ENCODE measurements at regions of chr12 and their contacts with region 1.

Region 1: GRCh38 chr12:81644503-81644902 is 114.6 kb downstream of the PPFIA2 start:
- DNase-seq: peak; percentile 41
- H3K4me3 ChIP-seq: no peak overlapping the region
- H3K27ac ChIP-seq: no peak overlapping the region
- H3K4me1 ChIP-seq: no peaks in the 10 kb centered on the region
- H3K27me3 ChIP-seq: peaks cover 0 to 1% of the 10 kb centered on the region in 2 experiments
- CTCF ChIP-seq: peak in 1 of 2 donors; percentile 9
- POLR2A ChIP-seq: no peak

Region 2: GRCh38 chr12:81797100-81797499 is 152.6 kb after region 1 on chr12:
- CTCF ChIA-PET with region 1: interaction called, 6 read pairs
- POLR2A ChIA-PET with region 1: no interaction called
- dilution Hi-C with region 1: no loop called
- intact Hi-C with region 1: loop called (anchors 5 kb)
- DNase-seq: peak; percentile 8
- H3K4me3 ChIP-seq: no peak overlapping the region
- H3K27ac ChIP-seq: no peak overlapping the region
- H3K4me1 ChIP-seq: no peaks in the 10 kb centered on the region
- H3K27me3 ChIP-seq: peaks cover 2 to 6% of the 10 kb centered on the region in 2 experiments
- CTCF ChIP-seq: peak; percentile 17 to 31
- POLR2A ChIP-seq: no peak

Region 3: GRCh38 chr12:81992461-81992860 is 348.0 kb after region 1 on chr12:
- CTCF ChIA-PET with region 1: interaction called, 3 read pairs
- POLR2A ChIA-PET with region 1: no interaction called
- dilution Hi-C with region 1: no loop called
- intact Hi-C with region 1: loop called (anchors 1 kb)
- DNase-seq: peak; percentile 1
- H3K4me3 ChIP-seq: no peak overlapping the region
- H3K27ac ChIP-seq: no peak overlapping the region
- H3K4me1 ChIP-seq: no peaks in the 10 kb centered on the region
- H3K27me3 ChIP-seq: no peaks in the 10 kb centered on the region
- CTCF ChIP-seq: no peak
- POLR2A ChIP-seq: no peak

Region 4: GRCh38 chr12:82019533-82019932 is 375.0 kb after region 1 on chr12:
- CTCF ChIA-PET with region 1: no interaction called
- POLR2A ChIA-PET with region 1: no interaction called
- dilution Hi-C with region 1: no loop called
- intact Hi-C with region 1: loop called (anchors 1 kb)
- DNase-seq: no peak
- H3K4me3 ChIP-seq: no peak overlapping the region
- H3K27ac ChIP-seq: no peak overlapping the region
- H3K4me1 ChIP-seq: no peaks in the 10 kb centered on the region
- H3K27me3 ChIP-seq: no peaks in the 10 kb centered on the region
- CTCF ChIP-seq: no peak
- POLR2A ChIP-seq: no peak

Region 5: GRCh38 chr12:82326905-82327503 is 682.5 kb after region 1 on chr12:
- CTCF ChIA-PET with region 1: interaction called, 23 read pairs
- POLR2A ChIA-PET with region 1: no interaction called
- dilution Hi-C with region 1: no loop called
- intact Hi-C with region 1: loop called (anchors 1 kb)
- DNase-seq: peak; percentile 28
- H3K4me3 ChIP-seq: no peak overlapping the region
- H3K27ac ChIP-seq: no peak overlapping the region
- H3K4me1 ChIP-seq: no peaks in the 10 kb centered on the region
- H3K27me3 ChIP-seq: no peaks in the 10 kb centered on the region
- CTCF ChIP-seq: peak; percentile 14 to 24
- POLR2A ChIP-seq: no peak

Region 6: GRCh38 chr12:82358200-82359114 is 714.0 kb after region 1 on chr12 and contains the starts of genes CCDC59 and METTL25:
- CTCF ChIA-PET with region 1: interaction called, 10 read pairs
- POLR2A ChIA-PET with region 1: no interaction called
- dilution Hi-C with region 1: no loop called
- intact Hi-C with region 1: loop called (anchors 1 kb)
- DNase-seq: peak; percentile 98
- H3K4me3 ChIP-seq: peak within 1 kb of the TSS; percentile 65 to 99 (median 81)
- H3K27ac ChIP-seq: peak within 1 kb of the TSS; percentile 90
- H3K4me1 ChIP-seq: peaks cover 21% of the 10 kb centered on the region
- H3K27me3 ChIP-seq: no peaks in the 10 kb centered on the region
- CTCF ChIP-seq: peak; percentile 96 to 98
- POLR2A ChIP-seq: no peak
- total RNA-seq, gene CCDC59: 45.4 and 50.7 TPM in 2 replicates
- total RNA-seq, gene METTL25: 8.5 and 10.4 TPM in 2 replicates

Measured in endothelial cell of umbilical vein (primary cell).